Activated T-helper 1 cell treated with anti-CD3 and anti-CD28 coated beads, Interleukin-12 subunit alpha, Interleukin-12 subunit beta, Interleukin-2, Interleukin-4 antibody, amounts not matched to agents 30 ng/mL and 10 ng/mL and 1 ng/mL, durations not matched to agents 14 hours and 24 hours and 36 hours (primary cell): ENCODE measurements at regions of chr6 and their contacts with region 1.

Region 1: GRCh38 chr6:130020907-130021629 is 2.7 kb downstream of the L3MBTL3 start:
- DNase-seq: peak; percentile 71
- H3K4me3 Mint-ChIP-seq: peak overlapping the region; percentile 97
- H3K27ac Mint-ChIP-seq: peak overlapping the region; percentile 93
- H3K4me1 Mint-ChIP-seq: peaks cover 34% of the 10 kb centered on the region
- H3K27me3 Mint-ChIP-seq: peaks cover 22% of the 10 kb centered on the region

Region 2: GRCh38 chr6:128655978-128656498 is 1365.0 kb before region 1 on chr6:
- intact Hi-C with region 1: loop called (anchors 2 kb)
- DNase-seq: no peak
- H3K4me3 Mint-ChIP-seq: no peak overlapping the region
- H3K27ac Mint-ChIP-seq: peak overlapping the region; percentile 25
- H3K4me1 Mint-ChIP-seq: no peaks in the 10 kb centered on the region
- H3K27me3 Mint-ChIP-seq: no peaks in the 10 kb centered on the region

Region 3: DNA sequence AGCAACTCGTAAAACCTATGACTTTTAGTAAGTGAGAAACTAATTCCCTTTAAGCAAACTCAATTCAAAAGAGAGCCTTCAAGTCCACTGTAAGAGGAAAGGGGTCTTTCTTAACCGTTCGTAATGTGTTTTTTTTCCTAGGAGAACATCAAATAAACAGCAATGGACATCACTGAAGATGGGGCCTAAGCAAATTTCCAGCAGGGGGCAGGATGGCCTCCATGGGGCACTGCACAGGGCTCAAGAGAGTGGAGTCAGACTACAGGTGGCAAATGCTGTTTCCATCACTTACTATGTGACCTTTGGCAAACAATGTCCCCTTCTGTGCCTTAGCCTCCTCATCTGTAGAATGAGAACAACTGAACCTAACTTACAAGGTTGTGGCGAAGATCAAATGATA is 399.8 kb before region 1 on chr6:
- intact Hi-C with region 1: loop called (anchors 5 kb)
- DNase-seq: no peak
- H3K4me3 Mint-ChIP-seq: no peak overlapping the region
- H3K27ac Mint-ChIP-seq: no peak overlapping the region
- H3K4me1 Mint-ChIP-seq: no peaks in the 10 kb centered on the region
- H3K27me3 Mint-ChIP-seq: no peaks in the 10 kb centered on the region

Region 4: GRCh38 chr6:129766959-129767728 is 253.9 kb before region 1 on chr6:
- intact Hi-C with region 1: loop called (anchors 2 kb)
- DNase-seq: peak; percentile 66
- H3K4me3 Mint-ChIP-seq: peak overlapping the region; percentile 83
- H3K27ac Mint-ChIP-seq: peak overlapping the region; percentile 66
- H3K4me1 Mint-ChIP-seq: peaks cover 37% of the 10 kb centered on the region
- H3K27me3 Mint-ChIP-seq: peaks cover 55% of the 10 kb centered on the region

Region 5: DNA sequence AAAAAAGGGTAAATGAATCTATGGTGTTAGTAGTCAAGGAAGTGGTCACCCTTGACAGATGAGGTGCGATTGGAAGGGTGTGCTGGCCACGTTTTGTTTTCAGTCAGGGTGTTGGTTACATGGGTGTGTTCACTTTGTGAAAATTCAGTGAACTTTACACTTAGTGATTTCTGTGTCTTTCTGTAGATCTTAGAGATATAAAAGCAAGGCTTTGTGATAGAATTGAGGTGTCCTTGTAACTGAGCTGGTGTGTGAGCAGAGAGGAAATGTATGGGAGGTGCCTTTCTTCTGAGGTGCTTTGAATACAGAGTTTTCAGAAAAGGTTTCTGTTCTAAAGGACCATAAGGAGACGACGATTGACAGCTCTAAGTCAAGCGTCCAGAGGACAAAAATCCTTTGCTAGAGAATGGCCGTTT is 111.2 kb after region 1 on chr6:
- intact Hi-C with region 1: loop called (anchors 1 kb)
- DNase-seq: peak; percentile 72
- H3K4me3 Mint-ChIP-seq: peak overlapping the region; percentile 36
- H3K27ac Mint-ChIP-seq: peak overlapping the region; percentile 84
- H3K4me1 Mint-ChIP-seq: peaks cover 83% of the 10 kb centered on the region
- H3K27me3 Mint-ChIP-seq: no peaks in the 10 kb centered on the region

Region 6: DNA sequence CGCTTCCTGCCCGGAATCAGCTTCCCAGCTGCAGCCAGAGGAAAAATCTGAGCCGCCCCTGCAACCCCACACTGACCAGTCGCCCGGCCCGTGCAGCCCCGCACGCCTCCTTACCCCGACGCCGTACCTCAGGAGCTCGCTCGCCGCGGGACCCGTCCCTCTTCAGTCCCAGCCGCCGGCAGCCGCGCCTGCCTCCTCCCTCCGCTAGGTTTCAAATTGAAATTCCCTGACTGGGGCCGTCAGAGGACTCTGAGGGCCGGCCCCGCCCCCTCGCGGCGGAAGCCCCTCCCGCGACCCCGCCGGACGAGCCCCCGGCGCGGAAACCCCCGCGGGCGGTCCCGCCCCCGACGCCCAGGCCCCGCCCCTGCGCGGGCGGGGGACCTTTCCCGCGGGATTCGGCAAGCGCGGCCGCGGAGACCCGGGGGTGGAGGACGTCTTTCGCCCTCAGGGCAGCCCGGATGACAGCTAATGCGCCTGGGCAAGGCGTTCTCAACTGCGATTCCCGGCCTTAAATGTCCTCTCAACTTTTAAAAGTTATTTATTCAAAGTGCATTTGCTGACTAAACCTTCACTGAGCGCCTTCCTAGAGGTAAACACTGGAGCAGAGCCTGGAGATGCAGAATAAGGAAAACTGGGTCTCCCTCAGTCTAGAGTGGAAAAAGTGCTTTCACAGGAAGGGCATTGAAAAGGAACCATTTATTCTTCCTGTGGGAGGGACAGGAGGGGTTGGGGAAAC is 1042.1 kb after region 1 on chr6 and contains the start of gene EPB41L2:
- intact Hi-C with region 1: loop called (anchors 10 kb)
- DNase-seq: peak; percentile 76
- H3K4me3 Mint-ChIP-seq: peak within 1 kb of the TSS; percentile 81
- H3K27ac Mint-ChIP-seq: peak within 1 kb of the TSS; percentile 14
- H3K4me1 Mint-ChIP-seq: peaks cover 21% of the 10 kb centered on the region
- H3K27me3 Mint-ChIP-seq: peaks cover 15% of the 10 kb centered on the region
- total RNA-seq, gene EPB41L2: 17.7 and 18.7 TPM in 2 replicates